ENCODE measurements at regions of chr1 and their contacts with region 1.

Region 1: GRCh38 chr1:26363549-26364448 is 8.8 kb downstream of the ZNF683 start:
- DNase-seq: peak; percentile 77
- H3K4me3 Mint-ChIP-seq: no peak overlapping the region
- H3K27ac Mint-ChIP-seq: no peak overlapping the region
- H3K4me1 Mint-ChIP-seq: peaks cover 25% of the 10 kb centered on the region
- H3K27me3 Mint-ChIP-seq: peaks cover 38% of the 10 kb centered on the region

Region 2: GRCh38 chr1:26399034-26399433 is 35.2 kb after region 1 on chr1:
- intact Hi-C with region 1: loop called (anchors 5 kb)
- DNase-seq: no peak
- H3K4me3 Mint-ChIP-seq: no peak overlapping the region
- H3K27ac Mint-ChIP-seq: no peak overlapping the region
- H3K4me1 Mint-ChIP-seq: no peaks in the 10 kb centered on the region
- H3K27me3 Mint-ChIP-seq: peaks cover 15% of the 10 kb centered on the region

Measured in activated T-helper 2 cell treated with anti-CD3 and anti-CD28 coated beads, Interferon-gamma antibody, Interleukin-2, Interleukin-4, amounts not matched to agents 10 μg/mL and 5 μg/mL and 100 μg/mL, durations not matched to agents 14 hours and 24 hours and 36 hours (primary cell).